ENCODE measurements at regions of chr14 and their contacts with region 1.

Region 1: GRCh38 chr14:22822571-22823098 is 7.1 kb upstream of the MRPL52 start:
- DNase-seq: peak; percentile 79
- ATAC-seq: peak; percentile 89
- H3K4me3 Mint-ChIP-seq: peak overlapping the region; percentile 39
- H3K27ac Mint-ChIP-seq: no peak overlapping the region
- H3K4me1 Mint-ChIP-seq: peaks cover 32% of the 10 kb centered on the region
- H3K27me3 Mint-ChIP-seq: peaks cover 24% of the 10 kb centered on the region

Region 2: DNA sequence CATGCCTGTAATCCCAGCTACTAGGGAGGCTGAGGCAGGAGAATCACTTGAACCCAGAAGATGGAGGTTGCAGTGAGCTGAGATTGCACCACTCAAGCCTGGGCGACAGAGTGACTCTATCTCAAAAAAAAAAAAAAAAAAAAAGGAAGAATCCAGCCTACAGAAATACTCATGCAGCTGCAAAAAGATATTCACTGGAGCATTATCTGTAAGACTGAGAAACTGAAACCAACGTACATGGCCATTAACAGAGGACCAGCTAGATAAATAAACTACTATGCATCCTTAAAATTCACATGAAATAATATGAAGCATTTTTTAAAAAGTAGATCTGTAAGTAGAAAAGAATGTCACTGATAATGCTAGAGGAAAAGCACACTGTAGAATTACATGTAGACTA is 10.9 kb before region 1 on chr14:
- CTCF ChIA-PET with region 1: interaction called, 15 read pairs
- POLR2A ChIA-PET with region 1: no interaction called
- DNase-seq: no peak
- ATAC-seq: no peak
- H3K4me3 Mint-ChIP-seq: no peak overlapping the region
- H3K27ac Mint-ChIP-seq: no peak overlapping the region
- H3K4me1 Mint-ChIP-seq: peaks cover 12% of the 10 kb centered on the region
- H3K27me3 Mint-ChIP-seq: peaks cover 6% of the 10 kb centered on the region

Region 3: DNA sequence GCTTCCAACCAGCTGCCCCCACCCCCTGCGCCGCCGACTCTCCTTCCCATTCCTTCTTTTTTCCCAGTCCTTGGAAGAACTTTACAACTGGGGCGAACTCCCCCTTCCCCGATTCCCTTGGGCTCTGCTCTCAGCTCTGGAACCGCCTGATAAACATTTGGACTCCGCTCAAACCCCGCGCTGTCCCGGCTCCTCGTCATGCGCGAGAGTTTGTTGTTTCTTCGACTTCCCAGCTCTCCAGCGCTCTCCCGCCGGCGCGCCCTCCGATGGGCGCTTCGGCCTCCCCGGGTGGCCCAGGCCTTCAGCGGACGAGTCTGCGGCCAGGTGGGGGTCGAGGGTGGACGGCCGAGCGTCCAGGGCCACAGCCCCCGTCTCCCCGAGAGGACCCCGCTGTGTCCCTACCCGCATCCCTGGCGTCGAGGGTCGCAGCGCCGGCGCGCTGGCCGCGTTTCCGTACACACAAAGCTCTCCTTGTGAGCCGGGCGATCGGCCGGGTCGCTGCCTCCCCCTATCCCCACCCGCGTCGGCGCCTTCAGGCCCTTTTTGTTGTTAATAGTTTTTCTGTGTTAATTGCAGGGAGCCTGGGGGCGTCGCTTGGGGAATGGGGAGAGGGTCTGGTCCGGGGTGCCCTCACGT is 14.6 kb after region 1 on chr14:
- CTCF ChIA-PET with region 1: interaction called, 590 read pairs
- POLR2A ChIA-PET with region 1: interaction called, 3 read pairs
- DNase-seq: no peak
- ATAC-seq: no peak
- H3K4me3 Mint-ChIP-seq: no peak overlapping the region
- H3K27ac Mint-ChIP-seq: no peak overlapping the region
- H3K4me1 Mint-ChIP-seq: peaks cover 25% of the 10 kb centered on the region
- H3K27me3 Mint-ChIP-seq: peaks cover 12% of the 10 kb centered on the region

Region 4: GRCh38 chr14:22886500-22887259 is 64.0 kb after region 1 on chr14:
- CTCF ChIA-PET with region 1: interaction called, 13 read pairs
- POLR2A ChIA-PET with region 1: no interaction called
- DNase-seq: peak; percentile 78
- ATAC-seq: peak; percentile 88
- H3K4me3 Mint-ChIP-seq: peak overlapping the region; percentile 75
- H3K27ac Mint-ChIP-seq: peak overlapping the region; percentile 75
- H3K4me1 Mint-ChIP-seq: peaks cover 31% of the 10 kb centered on the region
- H3K27me3 Mint-ChIP-seq: peaks cover 36% of the 10 kb centered on the region